PC-9 (cell line): ENCODE measurements at regions of chr20 and their contacts with region 1.

Region 1: GRCh38 chr20:19699180-19699971 is 58.7 kb upstream of the RIN2 start:
- DNase-seq: peak; percentile 45 to 57
- H3K4me3 ChIP-seq: no peak overlapping the region
- H3K27ac ChIP-seq: no peak overlapping the region
- H3K4me1 ChIP-seq: 0 out of 2 replicates have a peak, but pooled peaks cover 5% of the 10 kb centered on the region
- H3K27me3 ChIP-seq: no peaks in the 10 kb centered on the region
- CTCF ChIP-seq: no peak

Region 2: GRCh38 chr20:19588732-19589131 is 110.6 kb before region 1 on chr20:
- CTCF ChIA-PET with region 1: no interaction called
- POLR2A ChIA-PET with region 1: no interaction called
- intact Hi-C with region 1: no loop called
- DNase-seq: no peak
- H3K4me3 ChIP-seq: no peak overlapping the region
- H3K27ac ChIP-seq: no peak overlapping the region
- H3K4me1 ChIP-seq: no peaks in the 10 kb centered on the region
- H3K27me3 ChIP-seq: peaks cover 67% of the 10 kb centered on the region
- CTCF ChIP-seq: no peak

Region 3: DNA sequence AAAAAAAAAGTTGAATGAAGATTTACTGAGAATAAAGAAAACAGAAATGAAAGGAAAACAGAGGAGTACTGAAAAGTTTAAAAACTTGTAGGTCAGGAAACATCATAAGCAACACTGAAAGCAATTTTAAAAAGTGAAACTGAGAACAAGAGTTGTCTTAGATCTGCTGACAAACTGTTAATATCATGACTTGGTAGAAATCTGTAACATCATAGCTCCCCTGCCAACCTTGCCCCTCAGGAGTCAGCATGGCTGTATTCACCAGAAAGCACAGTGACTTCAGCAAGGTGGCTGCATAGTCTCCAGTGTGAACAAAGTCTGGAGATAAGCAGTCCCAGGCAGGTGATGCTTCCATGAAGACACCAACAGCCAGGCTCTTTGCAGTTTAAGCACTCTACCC is 323.1 kb after region 1 on chr20:
- CTCF ChIA-PET with region 1: no interaction called
- POLR2A ChIA-PET with region 1: interaction called, 31 read pairs
- intact Hi-C with region 1: no loop called
- DNase-seq: no peak
- H3K4me3 ChIP-seq: no peak overlapping the region
- H3K27ac ChIP-seq: no peak overlapping the region
- H3K4me1 ChIP-seq: peaks cover 22% of the 10 kb centered on the region
- H3K27me3 ChIP-seq: no peaks in the 10 kb centered on the region
- CTCF ChIP-seq: no peak